ENCODE measurements at regions of chr1 and their contacts with region 1.

Region 1: DNA sequence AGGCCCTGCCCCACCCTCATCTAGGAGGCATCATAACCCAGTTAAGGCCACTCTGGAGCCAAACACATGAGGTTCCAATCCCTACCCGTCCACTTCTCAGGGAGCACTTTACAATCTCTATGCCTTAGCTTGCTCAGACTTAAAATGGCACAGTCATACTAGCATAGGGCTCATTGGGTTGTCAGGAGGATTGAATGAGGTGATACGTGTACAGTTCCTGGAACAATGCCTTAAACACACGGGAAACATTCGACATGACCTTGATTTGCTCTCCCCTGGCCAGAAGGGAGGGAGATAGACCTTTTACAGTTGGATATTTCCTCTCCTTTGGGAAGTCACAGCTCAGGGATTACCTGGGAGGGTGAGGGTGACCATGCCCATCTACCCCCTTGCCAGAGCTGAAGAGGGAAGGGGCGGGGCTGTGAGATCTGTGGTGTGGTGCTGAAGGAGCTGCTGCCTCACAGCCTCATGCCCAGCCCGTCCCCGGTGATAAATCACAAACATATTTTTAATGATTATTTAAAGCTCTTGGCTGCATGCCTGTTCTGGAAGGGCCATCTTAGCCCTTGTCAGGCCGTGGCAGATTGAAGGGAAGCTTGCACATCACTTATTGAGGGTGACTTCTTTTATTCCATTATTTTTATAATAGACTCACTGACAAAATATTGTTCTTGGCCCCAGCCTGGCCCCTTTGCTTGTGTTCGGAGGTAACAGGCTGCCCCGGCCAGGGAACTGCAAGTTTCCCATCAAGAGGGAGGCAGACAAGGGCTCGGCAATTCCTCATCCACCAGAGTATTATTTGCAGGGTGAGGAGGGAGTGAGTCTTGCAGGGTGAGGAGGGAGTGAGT is 83.4 kb downstream of the FOXD2 start:
- DNase-seq: no peak
- H3K4me3 ChIP-seq: no peak overlapping the region
- H3K27ac ChIP-seq: no peak overlapping the region
- H3K4me1 ChIP-seq: peaks cover 3 to 16% (median 6%) of the 10 kb centered on the region in 4 experiments; a peak in 6 of 7 replicates
- H3K27me3 ChIP-seq: peaks cover 0 to 4% (median 0%) of the 10 kb centered on the region in 4 experiments; a peak in 4 of 7 replicates
- CTCF ChIP-seq: no peak
- EP300 ChIP-seq: no peak
- POLR2A ChIP-seq: no peak
- RAD21 ChIP-seq: no peak

Region 2: GRCh38 chr1:47280157-47280556 is 241.1 kb before region 1 on chr1:
- CTCF ChIA-PET with region 1: no interaction called
- POLR2A ChIA-PET with region 1: no interaction called
- DNase-seq: no peak
- H3K4me3 ChIP-seq: no peak overlapping the region
- H3K27ac ChIP-seq: no peak overlapping the region
- H3K4me1 ChIP-seq: no peaks in the 10 kb centered on the region
- H3K27me3 ChIP-seq: no peaks in the 10 kb centered on the region
- CTCF ChIP-seq: no peak
- EP300 ChIP-seq: no peak
- POLR2A ChIP-seq: no peak
- RAD21 ChIP-seq: no peak

Region 3: DNA sequence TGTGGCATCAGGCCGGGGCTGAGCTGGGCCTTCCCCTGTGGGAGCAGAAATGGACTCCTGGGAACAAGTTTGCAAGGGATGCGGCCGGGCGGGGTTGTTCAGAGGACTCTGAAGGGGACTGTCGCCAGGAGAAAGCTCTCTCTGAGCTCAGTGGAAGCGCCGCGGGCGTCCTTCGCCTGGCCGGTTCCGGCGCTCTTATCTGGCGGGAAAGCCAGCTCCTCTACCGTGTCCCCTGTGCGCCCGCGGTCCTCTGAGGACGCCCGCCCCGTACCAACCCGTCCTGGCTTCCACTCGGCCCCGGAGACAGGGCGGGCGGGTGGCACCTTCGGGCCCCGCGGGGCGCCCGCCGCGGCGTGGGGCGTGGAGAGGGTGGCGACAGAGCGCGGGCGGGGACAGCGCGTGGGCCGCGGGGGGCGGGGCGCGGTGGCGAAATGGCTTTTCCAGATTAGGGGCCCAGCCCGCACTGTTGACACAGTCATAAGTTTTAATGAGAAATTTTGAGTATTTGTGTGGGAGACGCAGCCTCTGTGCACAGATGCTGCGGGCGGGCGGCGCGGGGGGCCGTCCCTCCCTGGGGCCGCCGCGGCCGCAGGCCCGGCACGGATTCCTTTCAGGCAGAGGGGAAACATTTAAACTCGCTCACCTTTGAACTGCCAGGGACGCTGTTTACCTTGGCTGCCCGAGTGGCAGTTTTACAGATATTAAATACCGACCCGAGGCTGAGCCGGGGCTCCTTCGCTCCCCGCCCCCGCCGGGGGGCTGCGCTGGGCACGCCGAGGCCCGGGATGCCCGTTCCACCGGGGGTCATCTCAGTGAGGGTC is 13.2 kb before region 1 on chr1:
- CTCF ChIA-PET with region 1: interaction called, 11 read pairs
- POLR2A ChIA-PET with region 1: interaction called, 6 read pairs
- DNase-seq: peak in 1 of 2 experiments; percentile 57
- H3K4me3 ChIP-seq: peak overlapping the region; percentile 32 to 66 (median 43)
- H3K27ac ChIP-seq: no peak overlapping the region
- H3K4me1 ChIP-seq: peaks cover 0 to 5% (median 2%) of the 10 kb centered on the region in 4 experiments; a peak in 3 of 7 replicates
- H3K27me3 ChIP-seq: peaks cover 22 to 53% (median 47%) of the 10 kb centered on the region in 4 experiments
- CTCF ChIP-seq: no peak
- EP300 ChIP-seq: no peak
- POLR2A ChIP-seq: no peak
- RAD21 ChIP-seq: no peak